IMR-90 (cell line): ENCODE measurements at regions of chr16 and their contacts with region 1.

Region 1: DNA sequence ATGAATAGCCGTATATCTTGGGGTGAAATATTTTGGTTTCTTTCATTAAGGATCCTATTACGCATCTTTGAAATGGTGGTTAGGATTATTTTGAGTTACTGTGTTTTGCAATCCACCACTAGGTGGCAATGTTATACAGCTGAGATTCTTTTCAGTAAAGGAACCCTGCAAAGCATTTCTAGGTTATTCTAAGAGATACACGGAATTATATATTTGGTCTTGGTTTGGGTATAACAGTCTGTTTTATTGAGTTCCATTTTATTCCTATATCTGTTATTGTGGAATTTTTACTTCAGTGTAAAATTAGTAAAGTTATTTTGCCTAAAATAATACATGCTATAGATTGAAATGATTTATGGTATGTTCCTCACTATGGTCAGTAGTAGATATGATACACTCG is 62.9 kb upstream of the CPHXL start:
- DNase-seq: peak; percentile 46
- ATAC-seq: peak; percentile 84
- H3K4me3 ChIP-seq: no peak overlapping the region
- H3K27ac ChIP-seq: no peak overlapping the region
- H3K4me1 ChIP-seq: no peaks in the 10 kb centered on the region
- H3K27me3 ChIP-seq: no peaks in the 10 kb centered on the region
- CTCF ChIP-seq: peak; percentile 84
- POLR2A ChIP-seq: no peak
- RAD21 ChIP-seq: peak; percentile 90

Region 2: GRCh38 chr16:75774197-75774596 is 15.0 kb before region 1 on chr16:
- CTCF ChIA-PET with region 1: no interaction called
- POLR2A ChIA-PET with region 1: no interaction called
- dilution Hi-C with region 1: no loop called
- in situ Hi-C with region 1: no loop called
- intact Hi-C with region 1: no loop called
- DNase-seq: no peak
- ATAC-seq: no peak
- H3K4me3 ChIP-seq: no peak overlapping the region
- H3K27ac ChIP-seq: no peak overlapping the region
- H3K4me1 ChIP-seq: no peaks in the 10 kb centered on the region
- H3K27me3 ChIP-seq: no peaks in the 10 kb centered on the region
- CTCF ChIP-seq: no peak
- POLR2A ChIP-seq: no peak
- RAD21 ChIP-seq: no peak

Region 3: DNA sequence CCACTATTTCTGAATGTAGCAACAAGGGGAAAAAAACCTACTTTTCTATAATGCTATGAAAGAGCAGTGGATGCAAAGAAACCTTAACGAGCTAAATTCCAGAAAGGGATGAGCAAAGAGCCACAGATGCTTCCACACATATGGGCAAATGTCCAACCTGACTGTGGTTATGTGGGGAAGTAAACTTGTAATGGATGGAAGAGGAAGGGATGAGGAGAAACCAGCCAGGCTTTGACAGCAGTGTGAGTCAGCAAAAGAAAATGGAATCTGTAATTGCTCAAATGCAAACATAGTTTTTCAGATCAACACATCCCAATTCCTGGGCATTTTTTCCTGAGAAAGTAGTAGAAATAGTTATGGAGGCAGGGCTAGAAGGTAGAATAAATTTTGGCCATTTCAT is 141.8 kb after region 1 on chr16:
- CTCF ChIA-PET with region 1: interaction called, 10 read pairs
- POLR2A ChIA-PET with region 1: no interaction called
- dilution Hi-C with region 1: no loop called
- in situ Hi-C with region 1: no loop called
- intact Hi-C with region 1: no loop called
- DNase-seq: peak; percentile 97
- ATAC-seq: peak; percentile 85
- H3K4me3 ChIP-seq: no peak overlapping the region
- H3K27ac ChIP-seq: no peak overlapping the region
- H3K4me1 ChIP-seq: peaks cover 6% of the 10 kb centered on the region
- H3K27me3 ChIP-seq: no peaks in the 10 kb centered on the region
- CTCF ChIP-seq: no peak
- POLR2A ChIP-seq: no peak
- RAD21 ChIP-seq: no peak

Region 4: DNA sequence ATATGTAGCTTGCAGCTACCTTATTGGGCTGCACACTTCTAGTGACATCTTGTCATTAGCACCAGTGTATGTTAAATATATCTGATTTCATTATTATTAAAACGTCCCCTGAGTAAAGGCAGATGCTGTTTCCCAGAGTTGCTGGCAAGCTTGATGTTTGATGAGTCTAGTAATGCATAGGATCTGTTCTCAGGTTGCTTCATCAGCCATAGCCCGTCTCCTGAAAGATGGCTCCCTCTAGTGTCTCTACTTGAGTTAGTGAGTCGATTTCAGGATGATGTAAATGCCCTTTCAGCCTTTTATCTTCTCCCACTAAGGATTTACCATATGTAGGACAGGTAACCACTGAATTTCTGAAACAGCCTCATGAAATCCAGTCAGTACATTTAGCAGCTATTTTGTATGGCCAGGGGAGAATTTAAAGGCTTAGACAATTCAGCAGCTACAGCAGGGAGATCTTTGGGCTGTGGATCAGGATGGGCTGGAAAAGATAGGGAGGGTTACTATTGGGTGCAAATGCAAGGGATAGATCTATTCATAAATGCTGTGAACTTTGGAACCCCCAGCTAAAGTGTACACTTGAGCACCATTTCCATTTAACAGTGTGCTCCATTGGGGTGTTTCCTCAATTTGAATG is 864.3 kb after region 1 on chr16:
- CTCF ChIA-PET with region 1: interaction called, 3 read pairs
- POLR2A ChIA-PET with region 1: no interaction called
- dilution Hi-C with region 1: no loop called
- in situ Hi-C with region 1: loop called (anchors 10 kb)
- intact Hi-C with region 1: loop called (anchors 5 kb)
- DNase-seq: peak; percentile 28
- ATAC-seq: no peak
- H3K4me3 ChIP-seq: no peak overlapping the region
- H3K27ac ChIP-seq: no peak overlapping the region
- H3K4me1 ChIP-seq: no peaks in the 10 kb centered on the region
- H3K27me3 ChIP-seq: no peaks in the 10 kb centered on the region
- CTCF ChIP-seq: peak; percentile 57
- POLR2A ChIP-seq: no peak
- RAD21 ChIP-seq: peak; percentile 66

Region 5: DNA sequence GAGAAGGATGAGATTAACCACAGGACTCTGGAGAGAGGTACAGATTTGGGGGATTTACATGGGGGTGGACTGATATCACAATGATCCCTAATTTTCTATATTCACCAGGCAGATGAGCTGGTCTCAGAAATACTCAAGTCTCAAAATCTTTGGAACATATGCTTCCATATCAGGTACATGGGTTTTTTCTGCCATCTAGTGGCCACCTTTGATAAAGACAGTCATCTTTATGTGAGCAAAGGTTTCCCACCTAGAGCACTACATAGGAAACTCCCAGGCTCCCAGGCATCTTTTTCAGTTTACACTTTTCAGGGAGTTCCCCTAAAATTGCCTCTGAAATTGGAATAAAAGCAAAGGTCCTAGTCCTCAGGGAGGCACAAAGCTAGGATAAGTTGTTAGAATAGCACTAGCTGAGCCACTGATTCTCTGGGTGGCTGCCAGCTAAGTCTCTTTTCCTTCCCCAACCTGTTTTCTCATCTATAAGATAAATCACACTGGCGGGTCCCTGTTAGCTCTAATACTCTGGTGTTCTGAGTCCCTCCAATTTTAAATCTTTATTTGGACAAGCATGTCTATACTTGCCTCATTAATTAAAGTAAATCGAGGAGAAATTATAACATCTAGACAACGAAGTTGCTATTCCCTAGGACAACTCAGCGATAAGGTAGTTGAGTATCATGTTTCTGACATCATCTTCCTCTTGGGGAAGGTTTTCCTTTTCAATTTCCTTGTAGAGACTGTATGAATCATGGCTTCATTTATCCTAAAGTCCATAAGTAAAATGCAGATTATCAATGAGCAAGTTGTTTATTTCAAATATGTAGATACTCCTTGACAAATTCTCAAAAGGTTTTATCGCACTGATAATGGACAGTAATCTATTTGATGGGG is 1382.8 kb after region 1 on chr16:
- CTCF ChIA-PET with region 1: interaction called, 8 read pairs
- POLR2A ChIA-PET with region 1: no interaction called
- dilution Hi-C with region 1: loop called (anchors 25 kb)
- in situ Hi-C with region 1: loop called (anchors 5 kb)
- intact Hi-C with region 1: loop called (anchors 1 kb)
- DNase-seq: peak; percentile 59
- ATAC-seq: peak; percentile 85
- H3K4me3 ChIP-seq: no peak overlapping the region
- H3K27ac ChIP-seq: no peak overlapping the region
- H3K4me1 ChIP-seq: no peaks in the 10 kb centered on the region
- H3K27me3 ChIP-seq: peaks cover 1% of the 10 kb centered on the region; the same call in 1 of the 2 replicates
- CTCF ChIP-seq: peak; percentile 68
- POLR2A ChIP-seq: no peak
- RAD21 ChIP-seq: peak; percentile 72